Astrocyte of the cerebellum (primary cell): ENCODE measurements at regions of chr1 and their contacts with region 1.

Region 1: DNA sequence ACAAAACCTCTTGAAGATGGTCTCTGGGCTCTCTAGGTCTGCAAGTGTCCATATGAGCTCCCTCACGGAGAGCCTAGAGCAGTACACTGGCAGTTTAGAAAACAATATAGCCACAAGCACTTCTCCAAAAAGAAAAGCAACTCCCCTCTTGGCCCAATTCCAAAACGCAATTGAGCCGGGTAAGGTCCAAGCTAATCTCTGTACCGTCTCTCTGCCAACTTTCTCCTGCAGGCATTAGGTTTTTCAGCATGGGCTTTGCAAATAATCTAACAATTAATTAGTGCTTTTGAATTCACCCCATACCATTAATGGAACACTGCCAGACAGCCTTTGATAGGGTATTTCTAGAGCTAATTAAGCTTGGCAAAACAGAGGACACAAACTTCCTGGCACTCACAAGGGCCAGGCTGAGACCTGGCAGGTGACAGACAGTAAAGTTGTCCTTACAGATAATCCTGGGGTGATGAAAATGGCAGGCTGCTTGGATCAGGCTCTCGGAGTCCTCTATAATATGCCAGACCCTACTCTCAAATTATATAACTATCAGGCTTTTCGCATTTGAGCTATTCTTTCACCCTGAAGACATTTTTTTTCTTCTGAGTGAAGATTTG is 39.8 kb downstream of the TGFBR3 start:
- DNase-seq: peak; percentile 49
- H3K4me3 ChIP-seq: no peak overlapping the region
- CTCF ChIP-seq: no peak

Region 2: DNA sequence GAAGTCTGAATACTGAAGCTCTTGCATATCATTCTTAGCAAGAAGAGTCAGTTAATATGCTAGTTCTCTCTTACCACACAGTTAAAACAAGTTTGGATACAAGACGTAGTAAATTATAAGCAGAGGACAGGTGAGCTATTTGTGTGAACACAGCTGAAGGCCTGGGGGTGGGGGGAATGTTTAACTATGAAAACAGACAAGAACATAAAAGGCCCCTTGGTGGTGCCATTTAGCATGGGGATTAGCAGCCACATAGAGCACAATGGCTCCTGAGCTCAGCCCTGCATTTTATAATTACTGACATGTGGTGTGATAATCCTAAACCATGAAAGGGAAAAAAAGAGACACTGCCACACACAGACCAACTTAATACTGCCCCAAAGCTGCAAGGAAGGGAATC is 55.0 kb before region 1 on chr1:
- in situ Hi-C with region 1: no loop called
- DNase-seq: no peak
- H3K4me3 ChIP-seq: no peak overlapping the region
- CTCF ChIP-seq: no peak

Region 3: GRCh38 chr1:91804546-91805023 is 41.5 kb before region 1 on chr1:
- in situ Hi-C with region 1: loop called (anchors 5 kb)
- DNase-seq: peak; percentile 85
- H3K4me3 ChIP-seq: no peak overlapping the region
- CTCF ChIP-seq: no peak